K562 (cell line): ENCODE measurements at regions of chr3 and their contacts with region 1.

Region 1: GRCh38 chr3:160449636-160450598 is at the start of gene TRIM59:
- DNase-seq: peak; percentile 97 to 99 (median 98)
- ATAC-seq: peak; percentile 86
- H3K4me3 ChIP-seq: peak within 1 kb of the TSS; percentile 67
- H3K27ac ChIP-seq: peak within 1 kb of the TSS; percentile 98
- H3K4me1 ChIP-seq: peaks cover 18 to 39% of the 10 kb centered on the region in 2 experiments
- H3K27me3 ChIP-seq: no peaks in the 10 kb centered on the region
- CTCF ChIP-seq: peak; percentile 5 to 21 (median 9); a peak in 2 of 6 replicates
- EP300 ChIP-seq: 0 out of 2 replicates have a peak, but pooled peaks have one; percentile 37
- POLR2A ChIP-seq: peak; percentile 95
- RAD21 ChIP-seq: no peak
- polyA plus RNA-seq, gene TRIM59: 34.1 to 101 TPM

Region 2: GRCh38 chr3:160399125-160400029 is 50.5 kb before region 1 on chr3 and contains the starts of genes IFT80 and SMC4:
- CTCF ChIA-PET with region 1: no interaction called
- POLR2A ChIA-PET with region 1: interaction called, 6 read pairs
- in situ Hi-C with region 1: no loop called
- intact Hi-C with region 1: loop called (anchors 1 kb)
- DNase-seq: peak; percentile 92 to 97 (median 94)
- ATAC-seq: peak; percentile 81
- H3K4me3 ChIP-seq: peak within 1 kb of the TSS; percentile 71
- H3K27ac ChIP-seq: peak within 1 kb of the TSS; percentile 99
- H3K4me1 ChIP-seq: peaks cover 8 to 14% of the 10 kb centered on the region in 2 experiments
- H3K27me3 ChIP-seq: no peaks in the 10 kb centered on the region
- CTCF ChIP-seq: no peak; a peak in 1 of 6 replicates
- EP300 ChIP-seq: peak; percentile 66
- POLR2A ChIP-seq: peak; percentile 95
- RAD21 ChIP-seq: no peak
- polyA plus RNA-seq, gene IFT80: 6.7 to 7.2 TPM
- polyA plus RNA-seq, gene SMC4: 87.9 to 105 TPM

Region 3: GRCh38 chr3:160460033-160460432 is 10.1 kb after region 1 on chr3:
- CTCF ChIA-PET with region 1: no interaction called
- POLR2A ChIA-PET with region 1: interaction called, 51 read pairs
- in situ Hi-C with region 1: no loop called
- intact Hi-C with region 1: no loop called
- DNase-seq: no peak
- ATAC-seq: peak; percentile 42
- H3K4me3 ChIP-seq: no peak overlapping the region
- H3K27ac ChIP-seq: no peak overlapping the region
- H3K4me1 ChIP-seq: peaks cover 10 to 14% of the 10 kb centered on the region in 2 experiments
- H3K27me3 ChIP-seq: no peaks in the 10 kb centered on the region
- CTCF ChIP-seq: no peak
- EP300 ChIP-seq: no peak
- POLR2A ChIP-seq: no peak
- RAD21 ChIP-seq: no peak

Region 4: GRCh38 chr3:160486459-160486869 is 36.5 kb after region 1 on chr3:
- CTCF ChIA-PET with region 1: no interaction called
- POLR2A ChIA-PET with region 1: interaction called, 7 read pairs
- in situ Hi-C with region 1: no loop called
- intact Hi-C with region 1: loop called (anchors 5 kb)
- DNase-seq: peak in 1 of 4 experiments; percentile 67
- ATAC-seq: peak; percentile 26; the same call in 2 of the 3 replicates
- H3K4me3 ChIP-seq: no peak overlapping the region
- H3K27ac ChIP-seq: no peak overlapping the region
- H3K4me1 ChIP-seq: no peaks in the 10 kb centered on the region
- H3K27me3 ChIP-seq: no peaks in the 10 kb centered on the region
- CTCF ChIP-seq: peak in 2 of 3 experiments; percentile 36 to 70; a peak in 3 of 6 replicates
- EP300 ChIP-seq: no peak
- POLR2A ChIP-seq: no peak
- RAD21 ChIP-seq: peak; percentile 64 to 80

Region 5: DNA sequence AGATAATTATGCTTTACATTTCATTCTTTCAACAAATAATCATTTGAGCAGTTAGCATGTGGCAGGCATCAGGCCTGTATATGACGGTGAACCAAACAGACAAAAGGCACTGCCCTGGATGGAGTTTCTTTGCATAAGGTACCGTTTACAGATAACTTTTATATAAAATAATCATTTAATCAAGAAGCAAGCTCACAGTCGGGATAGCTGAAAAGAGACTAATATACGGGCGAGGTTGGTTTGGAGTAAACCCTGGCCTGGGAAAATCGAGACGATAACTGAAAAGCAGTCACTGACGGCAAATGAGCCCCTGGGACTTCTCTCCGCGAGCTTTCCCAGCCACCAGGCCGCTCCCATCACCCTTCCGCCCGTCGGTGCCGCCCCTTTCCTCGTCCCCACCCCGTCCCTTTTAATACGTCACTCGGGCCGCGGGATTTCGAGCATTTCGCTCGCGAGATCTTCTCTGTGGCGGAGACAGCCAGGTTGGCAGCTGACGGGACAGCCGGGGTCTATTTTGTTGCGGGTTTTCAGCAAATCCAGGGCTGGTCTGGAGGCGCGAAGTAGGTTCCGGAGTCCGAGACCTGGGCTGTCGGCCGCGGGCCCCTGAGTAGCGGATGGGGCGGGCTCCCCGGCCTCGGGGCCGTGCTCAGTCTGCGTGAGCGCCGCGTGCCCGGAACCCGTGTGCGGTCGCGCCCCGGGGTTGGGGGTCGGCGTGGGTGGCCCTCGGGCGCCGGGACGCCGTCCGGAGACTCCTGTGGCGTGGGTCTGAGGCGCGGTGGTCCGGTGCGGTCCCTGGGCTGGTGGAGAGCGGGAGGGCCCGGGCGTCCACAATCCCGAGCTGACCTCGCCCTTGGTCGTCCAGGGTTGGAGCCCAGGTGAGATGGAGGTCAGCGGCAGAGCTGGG is 771.2 kb after region 1 on chr3 and contains the start of gene NMD3:
- CTCF ChIA-PET with region 1: no interaction called
- POLR2A ChIA-PET with region 1: no interaction called
- in situ Hi-C with region 1: no loop called
- intact Hi-C with region 1: loop called (anchors 5 kb)
- DNase-seq: peak; percentile 88 to 95 (median 92)
- ATAC-seq: peak; percentile 91
- H3K4me3 ChIP-seq: peak within 1 kb of the TSS; percentile 85
- H3K27ac ChIP-seq: peak within 1 kb of the TSS; percentile 89
- H3K4me1 ChIP-seq: no peaks in the 10 kb centered on the region; a peak in 3 of 5 replicates
- H3K27me3 ChIP-seq: no peaks in the 10 kb centered on the region
- CTCF ChIP-seq: no peak
- EP300 ChIP-seq: no peak
- POLR2A ChIP-seq: peak; percentile 94
- RAD21 ChIP-seq: no peak
- polyA plus RNA-seq, gene NMD3: 147 to 178 TPM